Cardiac septum (tissue), 1 donor: ENCODE measurements at regions of chr5 and their contacts with region 1.

Region 1: GRCh38 chr5:103232393-103232999 is 26.1 kb upstream of the MACIR start:
- DNase-seq: no peak

Region 2: DNA sequence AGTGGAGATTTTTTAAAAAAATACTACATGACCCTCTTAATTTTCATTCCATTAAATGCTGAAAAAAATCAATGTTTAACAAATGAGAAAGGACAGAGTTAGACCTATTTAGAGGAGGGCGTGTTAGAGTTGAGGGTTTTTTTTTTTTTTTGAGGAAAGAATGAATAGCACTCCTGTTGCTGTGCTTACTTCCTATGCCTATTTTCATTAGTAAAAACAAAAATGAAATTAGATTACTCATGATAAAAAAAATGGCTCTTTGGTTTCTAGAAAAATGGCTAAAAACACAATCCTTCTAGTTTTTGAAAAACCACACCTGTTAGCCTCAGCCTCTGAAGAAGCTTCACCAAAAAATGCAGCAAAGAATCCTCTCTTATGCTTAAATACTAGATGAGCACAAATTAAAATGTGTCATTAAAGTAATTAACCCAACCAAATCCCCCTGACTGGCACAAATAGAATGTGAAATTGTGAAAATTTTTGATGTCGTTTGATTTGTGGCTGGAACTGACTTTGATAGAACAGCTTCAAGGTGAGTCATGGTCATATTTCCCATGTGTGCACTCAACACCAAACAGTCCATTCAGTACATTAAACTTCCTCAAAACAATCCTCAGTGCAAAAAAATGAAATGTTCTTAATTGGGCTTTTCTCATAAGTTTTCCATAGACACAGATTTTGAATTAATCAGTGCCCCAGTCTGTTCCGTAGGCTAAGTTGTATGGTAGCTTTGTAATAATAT is 124.0 kb after region 1 on chr5:
- intact Hi-C with region 1: no loop called
- DNase-seq: no peak

Region 3: GRCh38 chr5:103475629-103476240 is 243.2 kb after region 1 on chr5:
- intact Hi-C with region 1: loop called (anchors 2 kb)
- DNase-seq: no peak